B cell (primary cell): ENCODE measurements at regions of chr12 and their contacts with region 1.

Region 1: DNA sequence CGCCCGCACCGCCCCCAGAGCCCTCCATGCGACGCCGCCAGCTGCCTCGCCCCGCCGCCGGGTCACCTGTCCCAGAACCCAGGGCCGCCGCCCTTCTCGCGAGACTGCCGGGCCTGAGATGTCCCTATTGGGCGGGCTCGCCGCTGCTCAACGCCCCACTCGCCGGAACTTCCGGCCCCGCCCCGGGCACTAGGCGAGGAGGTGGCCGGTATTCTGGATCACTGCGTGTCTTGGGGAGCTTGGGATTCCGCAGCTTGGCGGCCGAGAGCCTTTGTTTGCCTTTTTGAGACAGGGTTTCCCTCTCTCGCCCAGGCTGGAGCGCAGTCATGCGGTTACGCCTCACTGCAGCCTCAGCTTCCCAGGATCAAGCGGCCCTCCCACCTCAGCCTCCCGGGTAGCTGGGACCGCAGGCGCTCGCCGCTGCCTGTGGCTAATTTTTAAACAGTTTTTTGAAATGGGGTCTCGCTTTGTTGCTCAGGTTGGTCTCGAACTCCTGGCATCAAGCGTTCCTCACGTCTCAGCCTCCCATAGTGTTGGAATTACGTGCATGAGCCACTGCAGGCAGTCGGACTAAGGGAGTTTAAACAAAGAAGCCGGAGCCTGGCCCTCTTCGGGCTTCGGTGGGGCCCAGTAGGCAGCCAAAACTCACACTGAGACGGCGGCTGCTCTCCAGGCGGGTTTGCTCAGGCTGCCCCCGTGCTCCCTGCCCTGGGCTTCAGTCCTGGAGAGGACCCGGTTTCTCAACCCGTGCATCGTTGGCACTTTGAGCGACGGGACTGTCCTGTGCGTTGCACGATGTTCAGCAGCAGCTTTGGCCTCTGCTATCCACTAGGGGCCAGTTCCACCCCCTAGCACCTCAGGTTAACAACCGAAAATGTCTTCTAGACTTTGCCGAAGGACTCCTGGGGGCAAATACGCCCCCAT is at the start of gene SLC15A4:
- DNase-seq: peak; percentile 95
- ATAC-seq: peak; percentile 83
- H3K4me3 ChIP-seq: peak within 1 kb of the TSS; percentile 56 to 93 (median 67)
- H3K4me3 Mint-ChIP-seq: peak within 1 kb of the TSS; percentile 88
- H3K27ac ChIP-seq: peak within 1 kb of the TSS; percentile 69 to 82
- H3K27ac Mint-ChIP-seq: peak within 1 kb of the TSS; percentile 89
- H3K4me1 ChIP-seq: peaks cover 41 to 59% of the 10 kb centered on the region in 2 donors
- H3K4me1 Mint-ChIP-seq: peaks cover 47% of the 10 kb centered on the region
- H3K27me3 ChIP-seq: no peaks in the 10 kb centered on the region
- H3K27me3 Mint-ChIP-seq: no peaks in the 10 kb centered on the region
- CTCF ChIP-seq: no peak
- total RNA-seq, gene SLC15A4: 64.4 and 67.2 TPM in 2 replicates

Region 2: GRCh38 chr12:128783129-128783574 is 41.0 kb before region 1 on chr12:
- CTCF ChIA-PET with region 1: interaction called, 11 read pairs
- POLR2A ChIA-PET with region 1: no interaction called
- intact Hi-C with region 1: no loop called
- DNase-seq: peak; percentile 72
- ATAC-seq: peak; percentile 45
- H3K4me3 ChIP-seq: peak overlapping the region in 3 of 5 experiments; percentile 5 to 53 (median 50)
- H3K4me3 Mint-ChIP-seq: peak overlapping the region; percentile 76
- H3K27ac ChIP-seq: peak overlapping the region; percentile 44 to 48
- H3K27ac Mint-ChIP-seq: peak overlapping the region; percentile 69
- H3K4me1 ChIP-seq: peaks cover 33 to 40% of the 10 kb centered on the region in 2 donors
- H3K4me1 Mint-ChIP-seq: peaks cover 24% of the 10 kb centered on the region
- H3K27me3 ChIP-seq: no peaks in the 10 kb centered on the region
- H3K27me3 Mint-ChIP-seq: no peaks in the 10 kb centered on the region
- CTCF ChIP-seq: no peak

Region 3: DNA sequence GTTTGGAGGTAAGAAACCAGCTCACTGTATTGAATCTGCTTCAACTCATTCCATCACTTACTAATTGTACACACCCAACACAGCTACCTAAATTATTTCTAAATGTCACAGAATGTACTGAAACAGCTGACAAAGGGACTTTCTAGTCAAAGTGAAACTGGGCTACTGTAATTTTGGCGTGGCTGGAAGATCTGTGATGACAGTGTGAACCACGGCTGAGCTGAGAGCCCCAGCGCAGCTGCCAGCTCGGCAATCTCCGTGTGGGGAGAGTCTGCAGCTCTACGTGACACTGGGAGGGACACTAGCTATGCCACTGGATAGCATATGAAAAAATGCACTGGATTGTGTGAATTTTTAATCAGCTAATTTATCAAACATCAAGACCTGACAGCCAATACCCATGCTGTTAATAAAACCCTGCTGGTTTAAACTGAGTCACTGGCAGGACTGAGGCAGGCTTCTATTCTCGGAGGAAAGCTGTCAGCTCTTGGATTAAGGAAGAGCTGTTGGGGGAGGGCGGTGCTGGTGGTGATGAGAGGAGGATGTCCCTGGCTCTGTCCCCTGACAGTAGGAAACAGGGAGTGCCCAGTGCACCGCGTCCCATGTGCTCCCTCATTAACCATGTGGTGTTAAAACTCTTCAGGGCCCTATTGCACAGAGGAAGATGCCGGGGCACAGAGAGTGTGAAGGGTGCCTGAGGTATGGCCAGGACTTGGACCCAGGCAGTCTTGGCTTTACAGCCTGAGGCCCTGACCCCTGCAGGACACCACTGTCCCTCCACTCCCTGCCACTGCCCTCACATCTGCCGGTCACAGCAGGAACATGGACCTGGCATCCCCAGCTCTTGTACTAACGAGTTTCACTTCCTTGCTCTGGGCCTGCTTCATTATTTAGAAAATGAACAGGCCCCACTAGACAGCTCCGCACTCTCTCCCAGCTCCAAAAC is 13.7 kb before region 1 on chr12:
- CTCF ChIA-PET with region 1: interaction called, 26 read pairs
- POLR2A ChIA-PET with region 1: interaction called, 11 read pairs
- intact Hi-C with region 1: no loop called
- DNase-seq: peak; percentile 74
- ATAC-seq: peak; percentile 90
- H3K4me3 ChIP-seq: peak overlapping the region in 2 of 5 experiments; percentile 3 to 7
- H3K4me3 Mint-ChIP-seq: peak overlapping the region; percentile 66
- H3K27ac ChIP-seq: peak overlapping the region; percentile 63 to 73
- H3K27ac Mint-ChIP-seq: peak overlapping the region; percentile 85
- H3K4me1 ChIP-seq: peaks cover 43 to 47% of the 10 kb centered on the region in 2 donors
- H3K4me1 Mint-ChIP-seq: peaks cover 56% of the 10 kb centered on the region
- H3K27me3 ChIP-seq: no peaks in the 10 kb centered on the region
- H3K27me3 Mint-ChIP-seq: no peaks in the 10 kb centered on the region
- CTCF ChIP-seq: no peak

Region 4: DNA sequence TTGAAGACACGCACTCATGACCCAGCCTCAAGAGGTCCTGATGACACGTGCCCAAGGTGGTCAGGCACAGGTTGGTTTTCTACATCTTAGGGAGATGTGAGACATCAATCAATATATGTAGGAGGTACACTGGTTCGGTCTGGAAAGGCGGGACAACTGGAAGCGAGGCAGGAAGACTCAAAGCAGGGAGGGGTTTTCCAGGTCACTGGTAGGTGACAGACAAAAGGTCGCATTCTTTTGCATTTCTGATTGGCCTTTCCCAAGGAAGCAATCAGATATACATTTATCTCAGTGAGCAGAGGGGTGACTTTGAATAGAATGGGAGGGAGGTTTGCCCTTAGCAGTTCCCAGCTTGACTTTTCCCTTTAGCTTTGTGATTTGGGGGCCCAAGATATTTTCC is 67.7 kb after region 1 on chr12:
- CTCF ChIA-PET with region 1: no interaction called
- POLR2A ChIA-PET with region 1: no interaction called
- intact Hi-C with region 1: no loop called
- DNase-seq: no peak
- ATAC-seq: no peak
- H3K4me3 ChIP-seq: no peak overlapping the region
- H3K4me3 Mint-ChIP-seq: no peak overlapping the region
- H3K27ac ChIP-seq: no peak overlapping the region
- H3K27ac Mint-ChIP-seq: no peak overlapping the region
- H3K4me1 ChIP-seq: no peaks in the 10 kb centered on the region
- H3K4me1 Mint-ChIP-seq: no peaks in the 10 kb centered on the region
- H3K27me3 ChIP-seq: no peaks in the 10 kb centered on the region
- H3K27me3 Mint-ChIP-seq: no peaks in the 10 kb centered on the region
- CTCF ChIP-seq: no peak

Region 5: GRCh38 chr12:128914908-128915563 is 90.9 kb after region 1 on chr12:
- CTCF ChIA-PET with region 1: no interaction called
- POLR2A ChIA-PET with region 1: no interaction called
- intact Hi-C with region 1: loop called (anchors 10 kb)
- DNase-seq: peak; percentile 65
- ATAC-seq: peak; percentile 81
- H3K4me3 ChIP-seq: no peak overlapping the region
- H3K4me3 Mint-ChIP-seq: no peak overlapping the region
- H3K27ac ChIP-seq: no peak overlapping the region
- H3K27ac Mint-ChIP-seq: no peak overlapping the region
- H3K4me1 ChIP-seq: peaks cover 4 to 5% of the 10 kb centered on the region in 2 donors
- H3K4me1 Mint-ChIP-seq: peaks cover 8% of the 10 kb centered on the region
- H3K27me3 ChIP-seq: no peaks in the 10 kb centered on the region
- H3K27me3 Mint-ChIP-seq: peaks cover 28% of the 10 kb centered on the region
- CTCF ChIP-seq: no peak